ENCODE measurements at regions of chr22 and their contacts with region 1.

Region 1: GRCh38 chr22:31399211-31400028 is at the start of gene DRG1:
- DNase-seq: peak; percentile 93 to 99 (median 98)

Region 2: DNA sequence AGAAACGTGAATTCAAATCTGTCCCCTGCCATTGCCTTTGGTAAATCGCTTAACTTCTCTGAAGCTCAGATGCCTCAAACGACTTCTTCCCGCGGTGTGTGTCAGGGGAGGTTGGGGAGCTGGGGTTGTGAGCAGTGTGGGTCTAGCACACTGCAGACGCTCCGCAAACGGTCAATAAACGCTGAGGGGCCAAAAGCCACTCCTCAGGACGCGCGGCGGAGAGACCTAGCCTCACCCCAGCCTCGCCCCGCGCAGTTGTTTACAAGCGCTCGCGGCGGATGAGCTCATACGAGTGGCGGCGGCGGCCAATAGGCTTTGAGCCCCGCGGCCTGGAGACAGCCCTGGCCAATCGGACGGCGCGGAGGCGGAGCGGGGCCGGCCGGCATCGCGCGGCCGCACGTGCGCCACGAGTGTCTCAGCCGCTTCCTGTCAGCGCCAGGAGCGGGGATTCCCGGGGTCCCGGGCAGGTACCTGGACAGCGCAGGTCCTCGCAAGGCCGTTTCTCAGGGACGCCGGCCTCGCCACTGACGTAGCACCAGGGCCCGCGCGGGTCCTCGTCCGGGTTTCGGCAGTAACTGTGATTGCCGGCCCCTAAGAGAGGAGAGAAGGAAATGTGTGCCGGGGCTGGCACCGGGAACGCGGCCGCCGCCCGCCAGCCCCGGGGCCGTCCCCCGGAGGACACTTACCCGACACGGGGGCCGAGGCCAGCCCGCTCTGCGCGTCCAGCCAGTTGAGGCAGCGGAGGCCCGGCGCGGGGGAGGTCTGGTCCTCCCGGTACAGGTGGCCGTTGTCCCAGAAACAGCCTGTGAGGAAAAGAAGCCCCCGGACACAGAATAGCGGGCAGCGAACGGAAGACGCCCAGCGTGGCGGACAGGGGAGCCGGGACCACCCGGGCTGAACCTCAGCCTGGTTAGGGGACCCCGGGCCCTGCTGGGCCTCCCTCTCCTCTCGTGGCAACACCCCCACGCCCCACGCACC is 108.6 kb before region 1 on chr22:
- intact Hi-C with region 1: loop called (anchors 5 kb)
- DNase-seq: peak; percentile 93 to 98 (median 95)

Region 3: GRCh38 chr22:31489604-31490495 is 90.4 kb after region 1 on chr22 and contains the start of gene EIF4ENIF1:
- intact Hi-C with region 1: loop called (anchors 5 kb)
- DNase-seq: peak; percentile 71 to 95 (median 90)

Measured in head of caudate nucleus (tissue), 42 donors.